GM12878 (cell line): ENCODE measurements at regions of chr13 and their contacts with region 1.

Region 1: GRCh38 chr13:28805193-28805819 is 14.8 kb upstream of the MTUS2 start:
- DNase-seq: no peak
- ATAC-seq: peak; percentile 52; the same call in 2 of the 3 replicates
- H3K4me3 ChIP-seq: no peak overlapping the region
- H3K27ac ChIP-seq: no peak overlapping the region
- H3K4me1 ChIP-seq: no peaks in the 10 kb centered on the region
- H3K27me3 ChIP-seq: no peaks in the 10 kb centered on the region; a peak in 1 of 4 replicates
- CTCF ChIP-seq: peak; percentile 13 to 39 (median 39); a peak in 5 of 6 replicates
- EP300 ChIP-seq: no peak
- POLR2A ChIP-seq: no peak
- RAD21 ChIP-seq: 0 out of 2 replicates have a peak, but pooled peaks have one; percentile 20

Region 2: GRCh38 chr13:28322256-28322905 is 482.9 kb before region 1 on chr13:
- CTCF ChIA-PET with region 1: no interaction called
- POLR2A ChIA-PET with region 1: no interaction called
- RAD21 ChIA-PET with region 1: no interaction called
- SMC1A ChIA-PET with region 1: no interaction called
- in situ Hi-C with region 1: no loop called
- intact Hi-C with region 1: no loop called
- DNase-seq: no peak
- ATAC-seq: no peak
- H3K4me3 ChIP-seq: no peak overlapping the region
- H3K27ac ChIP-seq: no peak overlapping the region
- H3K4me1 ChIP-seq: no peaks in the 10 kb centered on the region
- H3K27me3 ChIP-seq: no peaks in the 10 kb centered on the region
- CTCF ChIP-seq: no peak
- EP300 ChIP-seq: no peak
- POLR2A ChIP-seq: no peak
- RAD21 ChIP-seq: no peak

Region 3: GRCh38 chr13:28707629-28708427 is 97.5 kb before region 1 on chr13:
- CTCF ChIA-PET with region 1: no interaction called
- POLR2A ChIA-PET with region 1: no interaction called
- RAD21 ChIA-PET with region 1: no interaction called
- SMC1A ChIA-PET with region 1: no interaction called
- in situ Hi-C with region 1: no loop called
- intact Hi-C with region 1: no loop called
- DNase-seq: peak; percentile 94
- ATAC-seq: peak; percentile 100
- H3K4me3 ChIP-seq: peak overlapping the region; percentile 49
- H3K27ac ChIP-seq: peak overlapping the region; percentile 51
- H3K4me1 ChIP-seq: peaks cover 9% of the 10 kb centered on the region; the same call in 1 of the 2 replicates
- H3K27me3 ChIP-seq: no peaks in the 10 kb centered on the region
- CTCF ChIP-seq: no peak
- EP300 ChIP-seq: peak; percentile 91 to 93
- POLR2A ChIP-seq: no peak
- RAD21 ChIP-seq: no peak

Region 4: GRCh38 chr13:29369060-29369743 is 563.9 kb after region 1 on chr13:
- CTCF ChIA-PET with region 1: no interaction called
- POLR2A ChIA-PET with region 1: no interaction called
- RAD21 ChIA-PET with region 1: no interaction called
- SMC1A ChIA-PET with region 1: no interaction called
- in situ Hi-C with region 1: loop called (anchors 5 kb)
- intact Hi-C with region 1: loop called (anchors 5 kb)
- DNase-seq: peak; percentile 12
- ATAC-seq: peak; percentile 49
- H3K4me3 ChIP-seq: no peak overlapping the region
- H3K27ac ChIP-seq: no peak overlapping the region
- H3K4me1 ChIP-seq: no peaks in the 10 kb centered on the region
- H3K27me3 ChIP-seq: no peaks in the 10 kb centered on the region
- CTCF ChIP-seq: peak; percentile 30 to 46 (median 32); a peak in 5 of 6 replicates
- EP300 ChIP-seq: no peak
- POLR2A ChIP-seq: no peak
- RAD21 ChIP-seq: peak; percentile 67